Calu3 (cell line): ENCODE measurements at regions of chr2 and their contacts with region 1.

Region 1: GRCh38 chr2:138931284-138932256 is 151.4 kb upstream of the NXPH2 start:
- DNase-seq: no peak
- H3K4me3 Mint-ChIP-seq: no peak overlapping the region
- H3K27ac Mint-ChIP-seq: no peak overlapping the region
- H3K4me1 Mint-ChIP-seq: no peaks in the 10 kb centered on the region
- H3K27me3 Mint-ChIP-seq: no peaks in the 10 kb centered on the region
- CTCF ChIP-seq: no peak

Region 2: GRCh38 chr2:138752197-138752956 is 179.2 kb before region 1 on chr2:
- CTCF ChIA-PET with region 1: no interaction called
- intact Hi-C with region 1: no loop called
- DNase-seq: peak; percentile 13
- H3K4me3 Mint-ChIP-seq: no peak overlapping the region
- H3K27ac Mint-ChIP-seq: peak overlapping the region; percentile 42
- H3K4me1 Mint-ChIP-seq: peaks cover 7% of the 10 kb centered on the region
- H3K27me3 Mint-ChIP-seq: no peaks in the 10 kb centered on the region
- CTCF ChIP-seq: no peak

Region 3: DNA sequence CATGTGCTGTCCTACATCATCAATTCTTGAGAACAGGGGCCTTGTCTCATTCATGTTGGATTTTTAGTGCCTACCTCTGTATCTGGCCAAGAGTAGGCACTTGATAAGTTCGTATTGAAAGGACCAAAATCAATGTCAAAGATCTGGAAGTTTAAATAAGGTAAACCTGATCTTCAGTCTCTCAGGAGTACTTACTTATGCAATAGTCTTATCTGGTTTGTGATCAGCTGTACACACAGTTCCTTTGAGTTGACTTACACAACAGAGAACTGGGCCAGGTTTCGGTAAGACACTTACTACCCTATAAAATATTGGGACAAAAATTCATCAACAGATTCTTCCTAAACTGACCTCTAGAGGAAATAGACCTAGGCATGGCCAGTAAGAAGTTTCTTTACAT is 37.9 kb before region 1 on chr2:
- CTCF ChIA-PET with region 1: no interaction called
- intact Hi-C with region 1: no loop called
- DNase-seq: no peak
- H3K4me3 Mint-ChIP-seq: no peak overlapping the region
- H3K27ac Mint-ChIP-seq: no peak overlapping the region
- H3K4me1 Mint-ChIP-seq: no peaks in the 10 kb centered on the region
- H3K27me3 Mint-ChIP-seq: no peaks in the 10 kb centered on the region
- CTCF ChIP-seq: no peak

Region 4: GRCh38 chr2:139142252-139142880 is 210.8 kb after region 1 on chr2:
- CTCF ChIA-PET with region 1: no interaction called
- intact Hi-C with region 1: loop called (anchors 10 kb)
- DNase-seq: peak; percentile 15
- H3K4me3 Mint-ChIP-seq: no peak overlapping the region
- H3K27ac Mint-ChIP-seq: no peak overlapping the region
- H3K4me1 Mint-ChIP-seq: no peaks in the 10 kb centered on the region
- H3K27me3 Mint-ChIP-seq: no peaks in the 10 kb centered on the region
- CTCF ChIP-seq: no peak